Activated B cell treated with CpG ODN at 0.5 μM for 24 hours (primary cell): ENCODE measurements at regions of chr19 and their contacts with region 1.

Region 1: GRCh38 chr19:44113138-44113783 is at the start of gene ZNF225:
- DNase-seq: peak; percentile 65
- ATAC-seq: peak; percentile 95
- H3K4me3 Mint-ChIP-seq: peak within 1 kb of the TSS; percentile 97
- H3K27ac Mint-ChIP-seq: peak within 1 kb of the TSS; percentile 83
- H3K4me1 Mint-ChIP-seq: peaks cover 31% of the 10 kb centered on the region
- H3K27me3 Mint-ChIP-seq: no peaks in the 10 kb centered on the region
- CTCF ChIP-seq: no peak
- total RNA-seq, gene ZNF225: 7.9 and 9.2 TPM in 2 replicates

Region 2: DNA sequence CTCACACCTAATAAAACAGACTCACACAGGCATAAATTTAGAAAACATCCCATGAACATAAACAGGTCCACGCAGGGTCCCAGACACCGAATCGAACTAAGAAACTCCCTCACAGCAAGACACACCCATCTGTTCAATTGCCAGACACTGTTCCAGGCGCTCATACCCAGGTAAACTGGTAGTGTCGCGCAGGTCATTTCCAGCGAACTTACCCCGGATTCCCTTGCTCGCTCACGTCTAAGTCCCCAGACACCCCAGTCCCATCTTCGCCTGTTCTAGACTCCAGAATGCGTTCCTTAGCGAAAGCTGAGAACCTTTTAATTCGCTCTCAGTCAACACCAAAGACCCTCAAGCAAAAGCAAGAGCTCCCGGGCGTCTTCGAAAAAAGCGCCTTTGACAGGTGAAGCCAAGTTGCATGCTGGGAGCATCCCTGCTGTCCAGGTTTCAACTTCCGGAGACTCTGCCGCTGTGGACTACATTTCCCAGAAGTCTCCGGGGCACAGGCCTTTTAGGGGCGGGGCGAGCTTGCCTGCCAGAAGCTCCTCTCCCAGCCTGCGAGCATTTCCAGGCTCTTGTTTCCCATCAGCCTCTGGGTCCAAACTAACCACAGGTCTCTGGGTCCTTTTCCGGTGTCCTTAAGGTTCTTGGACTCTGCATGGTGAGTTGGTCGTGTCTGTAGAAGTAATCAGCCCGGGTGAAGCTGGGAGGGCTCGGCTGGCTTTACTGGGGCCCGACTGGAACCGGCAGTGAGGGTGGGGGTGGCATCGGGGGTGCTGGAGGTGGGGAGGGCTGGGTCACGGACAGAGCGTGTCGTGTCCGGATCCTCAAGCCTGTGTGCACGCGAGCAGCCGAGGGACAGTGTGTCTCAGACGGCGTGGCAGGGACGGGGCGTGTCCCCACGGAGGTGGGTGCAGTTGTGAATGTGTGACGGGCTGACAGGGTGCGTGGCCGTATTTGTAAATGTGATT is 286.2 kb before region 1 on chr19 and contains the start of gene ZNF283:
- CTCF ChIA-PET with region 1: no interaction called
- POLR2A ChIA-PET with region 1: no interaction called
- intact Hi-C with region 1: loop called (anchors 5 kb)
- DNase-seq: peak; percentile 76
- ATAC-seq: peak; percentile 94
- H3K4me3 Mint-ChIP-seq: peak within 1 kb of the TSS; percentile 92
- H3K27ac Mint-ChIP-seq: peak within 1 kb of the TSS; percentile 53
- H3K4me1 Mint-ChIP-seq: peaks cover 16% of the 10 kb centered on the region
- H3K27me3 Mint-ChIP-seq: peaks cover 7% of the 10 kb centered on the region
- CTCF ChIP-seq: no peak
- total RNA-seq, gene ZNF283: 10.4 and 13.0 TPM in 2 replicates

Region 3: GRCh38 chr19:44071824-44072542 is 41.3 kb before region 1 on chr19 and contains the start of gene ZNF284:
- CTCF ChIA-PET with region 1: no interaction called
- POLR2A ChIA-PET with region 1: no interaction called
- intact Hi-C with region 1: loop called (anchors 1 kb)
- DNase-seq: peak; percentile 67
- ATAC-seq: peak; percentile 100
- H3K4me3 Mint-ChIP-seq: peak within 1 kb of the TSS; percentile 94
- H3K27ac Mint-ChIP-seq: peak within 1 kb of the TSS; percentile 80
- H3K4me1 Mint-ChIP-seq: peaks cover 26% of the 10 kb centered on the region
- H3K27me3 Mint-ChIP-seq: peaks cover 1% of the 10 kb centered on the region
- CTCF ChIP-seq: no peak
- total RNA-seq, gene ZNF284: 2.1 and 2.3 TPM in 2 replicates

Region 4: DNA sequence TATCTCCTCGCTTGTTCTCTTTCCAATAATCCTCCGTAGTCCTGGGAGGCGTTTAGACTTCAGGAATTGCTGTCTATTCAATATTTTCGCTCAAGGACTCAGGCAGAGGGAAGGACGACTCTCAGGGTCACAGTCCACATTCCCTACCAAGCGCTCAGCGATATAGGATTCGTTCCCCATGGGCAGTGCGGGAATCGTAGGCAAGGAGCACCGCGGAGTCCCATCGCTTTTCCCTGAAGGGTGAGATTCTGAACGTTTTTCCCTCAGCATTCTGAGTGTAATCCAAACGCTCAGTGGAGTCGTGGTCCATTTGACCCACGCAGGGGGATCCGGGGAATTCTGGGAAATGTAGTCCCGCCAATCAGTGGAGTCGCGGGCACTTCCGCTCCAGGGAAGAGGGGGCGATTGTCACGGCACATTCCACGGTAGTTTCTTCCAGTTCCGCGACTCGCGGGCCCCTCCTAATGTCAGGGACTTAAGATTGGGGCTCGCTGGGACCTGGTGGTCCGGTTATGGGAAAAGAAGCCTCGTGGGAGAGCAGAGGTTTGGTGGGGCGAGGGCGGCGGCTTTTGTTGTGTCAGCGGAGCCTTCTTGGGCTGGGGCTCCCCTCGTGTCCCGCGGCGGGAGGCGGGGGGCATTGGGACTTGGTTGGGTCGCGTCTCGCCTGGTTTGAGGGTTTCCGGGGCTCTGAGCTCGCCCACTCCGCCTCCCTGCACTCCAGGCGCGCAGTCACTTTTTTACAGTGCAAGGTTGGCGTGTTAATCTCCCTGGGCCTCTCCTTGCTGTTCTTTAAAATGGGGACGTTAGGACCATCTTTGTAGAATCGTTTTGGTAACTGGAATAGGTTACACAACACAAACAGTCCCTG is 28.2 kb after region 1 on chr19 and contains the start of gene ZNF234:
- CTCF ChIA-PET with region 1: no interaction called
- POLR2A ChIA-PET with region 1: no interaction called
- intact Hi-C with region 1: loop called (anchors 1 kb)
- DNase-seq: peak; percentile 58
- ATAC-seq: peak; percentile 93
- H3K4me3 Mint-ChIP-seq: peak within 1 kb of the TSS; percentile 98
- H3K27ac Mint-ChIP-seq: peak within 1 kb of the TSS; percentile 85
- H3K4me1 Mint-ChIP-seq: peaks cover 23% of the 10 kb centered on the region
- H3K27me3 Mint-ChIP-seq: no peaks in the 10 kb centered on the region
- CTCF ChIP-seq: no peak
- total RNA-seq, gene ZNF234: 14.8 and 18.8 TPM in 2 replicates

Region 5: DNA sequence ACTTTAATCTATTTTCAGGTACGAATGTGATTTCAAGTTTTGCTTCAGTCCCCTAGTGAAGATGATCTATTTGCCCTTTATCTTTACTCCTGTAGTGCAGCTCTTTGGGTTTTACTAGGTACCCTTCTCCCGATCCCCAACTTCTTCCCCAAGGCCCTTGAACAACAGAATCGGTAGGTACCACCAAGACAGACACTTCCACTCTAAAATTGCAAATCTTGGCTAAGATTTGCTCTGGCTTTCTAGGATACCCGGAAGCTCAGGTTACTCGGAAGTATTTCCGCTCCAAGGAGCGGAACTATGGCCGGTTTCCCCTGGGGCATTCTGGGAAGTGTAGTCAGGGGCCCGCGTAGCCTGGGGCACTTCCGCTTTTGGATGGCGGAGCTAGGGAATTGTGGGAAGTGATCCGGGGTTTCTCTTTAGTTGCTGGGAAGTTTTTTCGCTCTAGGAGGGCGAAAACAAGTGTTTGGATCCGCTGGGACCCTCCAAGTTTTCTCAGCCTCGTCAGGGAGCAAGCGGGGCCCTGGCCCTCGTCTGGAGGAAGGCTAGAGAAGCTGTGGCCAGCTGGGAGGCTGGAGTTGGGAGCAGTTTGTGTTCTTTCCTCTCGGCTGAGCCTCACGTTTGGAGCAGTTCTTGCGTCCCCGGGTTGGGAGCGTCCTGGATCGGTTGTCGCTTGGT is 94.0 kb after region 1 on chr19:
- CTCF ChIA-PET with region 1: no interaction called
- POLR2A ChIA-PET with region 1: no interaction called
- intact Hi-C with region 1: loop called (anchors 1 kb)
- DNase-seq: peak; percentile 71
- ATAC-seq: peak; percentile 91
- H3K4me3 Mint-ChIP-seq: peak overlapping the region; percentile 94
- H3K27ac Mint-ChIP-seq: peak overlapping the region; percentile 86
- H3K4me1 Mint-ChIP-seq: peaks cover 8% of the 10 kb centered on the region
- H3K27me3 Mint-ChIP-seq: peaks cover 3% of the 10 kb centered on the region
- CTCF ChIP-seq: no peak

Region 6: GRCh38 chr19:44212250-44212865 is 99.1 kb after region 1 on chr19 and contains the start of gene ZNF227:
- CTCF ChIA-PET with region 1: no interaction called
- POLR2A ChIA-PET with region 1: no interaction called
- intact Hi-C with region 1: loop called (anchors 1 kb)
- DNase-seq: peak; percentile 69
- ATAC-seq: peak; percentile 93
- H3K4me3 Mint-ChIP-seq: peak within 1 kb of the TSS; percentile 95
- H3K27ac Mint-ChIP-seq: peak within 1 kb of the TSS; percentile 89
- H3K4me1 Mint-ChIP-seq: peaks cover 20% of the 10 kb centered on the region
- H3K27me3 Mint-ChIP-seq: no peaks in the 10 kb centered on the region
- CTCF ChIP-seq: no peak
- total RNA-seq, gene ZNF227: 33.1 and 36.9 TPM in 2 replicates

Region 7: GRCh38 chr19:44304659-44305193 is 191.5 kb after region 1 on chr19 and contains the start of gene ZNF235:
- CTCF ChIA-PET with region 1: no interaction called
- POLR2A ChIA-PET with region 1: no interaction called
- intact Hi-C with region 1: loop called (anchors 1 kb)
- DNase-seq: peak; percentile 61
- ATAC-seq: peak; percentile 97
- H3K4me3 Mint-ChIP-seq: peak within 1 kb of the TSS; percentile 96
- H3K27ac Mint-ChIP-seq: peak within 1 kb of the TSS; percentile 76
- H3K4me1 Mint-ChIP-seq: peaks cover 20% of the 10 kb centered on the region
- H3K27me3 Mint-ChIP-seq: peaks cover 7% of the 10 kb centered on the region
- CTCF ChIP-seq: no peak
- total RNA-seq, gene ZNF235: 11.6 and 14.5 TPM in 2 replicates